ENCODE measurements at regions of chr2 and their contacts with region 1.

Region 1: DNA sequence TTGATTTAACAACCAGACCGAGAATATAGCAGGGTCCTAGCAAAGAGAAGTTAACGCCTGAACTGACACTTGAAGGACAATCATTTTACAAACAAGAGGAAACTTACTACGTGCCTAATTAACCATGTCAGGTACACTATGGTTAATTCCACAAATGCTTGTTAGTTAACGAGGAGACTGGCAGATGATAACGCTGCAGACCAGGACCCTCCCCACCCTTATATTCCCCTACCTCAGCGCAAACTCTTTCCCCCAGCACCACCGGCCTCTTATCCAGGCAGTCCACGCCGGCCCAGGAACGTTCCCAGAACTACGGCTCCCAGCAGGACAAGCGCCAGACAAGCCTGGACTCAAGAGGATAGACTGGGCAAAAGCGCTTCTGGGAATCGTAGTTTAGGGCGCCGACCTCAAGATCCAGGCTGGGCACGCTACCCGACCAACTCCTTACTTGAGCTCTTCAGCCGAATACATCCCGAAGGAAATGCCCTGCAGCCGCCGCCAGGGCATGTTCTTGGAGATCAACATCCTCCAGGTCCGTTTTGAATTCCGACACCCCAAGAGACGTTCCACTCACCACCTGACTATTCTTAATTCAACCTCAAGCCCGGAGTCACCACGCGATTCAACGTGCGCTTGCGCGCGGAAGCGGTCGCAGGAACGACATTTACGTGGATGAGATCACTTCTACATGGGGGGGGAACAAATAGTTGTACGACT is at the start of gene POLR1A:
- DNase-seq: peak; percentile 93
- H3K4me3 Mint-ChIP-seq: peak within 1 kb of the TSS; percentile 99
- H3K27ac Mint-ChIP-seq: peak within 1 kb of the TSS; percentile 99
- H3K4me1 Mint-ChIP-seq: peaks cover 31% of the 10 kb centered on the region
- H3K27me3 Mint-ChIP-seq: no peaks in the 10 kb centered on the region
- CTCF ChIP-seq: no peak
- total RNA-seq, gene POLR1A: 46.4 and 52.7 TPM in 2 replicates

Region 2: DNA sequence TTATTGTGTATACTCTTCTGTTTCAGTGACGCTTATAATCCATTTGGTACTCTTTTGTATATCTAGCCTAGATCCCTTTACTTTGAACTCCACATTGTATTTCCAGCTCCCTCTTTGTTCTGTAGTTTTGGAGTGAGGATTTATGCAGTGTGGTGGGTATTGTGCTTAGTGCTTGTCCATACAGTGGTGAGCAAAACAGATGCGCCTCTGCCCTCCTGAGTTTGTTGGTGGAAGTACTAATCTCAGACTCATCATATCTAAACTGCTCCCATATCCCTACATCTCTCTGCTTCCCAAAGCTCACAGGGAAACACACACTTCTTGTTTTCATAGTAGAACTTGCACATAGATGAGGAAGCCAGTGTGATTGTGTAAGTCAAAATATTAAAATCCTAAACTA is 12.7 kb after region 1 on chr2:
- CTCF ChIA-PET with region 1: interaction called, 5 read pairs
- POLR2A ChIA-PET with region 1: interaction called, 17 read pairs
- intact Hi-C with region 1: no loop called
- DNase-seq: no peak
- H3K4me3 Mint-ChIP-seq: no peak overlapping the region
- H3K27ac Mint-ChIP-seq: no peak overlapping the region
- H3K4me1 Mint-ChIP-seq: no peaks in the 10 kb centered on the region
- H3K27me3 Mint-ChIP-seq: no peaks in the 10 kb centered on the region
- CTCF ChIP-seq: no peak

Region 3: DNA sequence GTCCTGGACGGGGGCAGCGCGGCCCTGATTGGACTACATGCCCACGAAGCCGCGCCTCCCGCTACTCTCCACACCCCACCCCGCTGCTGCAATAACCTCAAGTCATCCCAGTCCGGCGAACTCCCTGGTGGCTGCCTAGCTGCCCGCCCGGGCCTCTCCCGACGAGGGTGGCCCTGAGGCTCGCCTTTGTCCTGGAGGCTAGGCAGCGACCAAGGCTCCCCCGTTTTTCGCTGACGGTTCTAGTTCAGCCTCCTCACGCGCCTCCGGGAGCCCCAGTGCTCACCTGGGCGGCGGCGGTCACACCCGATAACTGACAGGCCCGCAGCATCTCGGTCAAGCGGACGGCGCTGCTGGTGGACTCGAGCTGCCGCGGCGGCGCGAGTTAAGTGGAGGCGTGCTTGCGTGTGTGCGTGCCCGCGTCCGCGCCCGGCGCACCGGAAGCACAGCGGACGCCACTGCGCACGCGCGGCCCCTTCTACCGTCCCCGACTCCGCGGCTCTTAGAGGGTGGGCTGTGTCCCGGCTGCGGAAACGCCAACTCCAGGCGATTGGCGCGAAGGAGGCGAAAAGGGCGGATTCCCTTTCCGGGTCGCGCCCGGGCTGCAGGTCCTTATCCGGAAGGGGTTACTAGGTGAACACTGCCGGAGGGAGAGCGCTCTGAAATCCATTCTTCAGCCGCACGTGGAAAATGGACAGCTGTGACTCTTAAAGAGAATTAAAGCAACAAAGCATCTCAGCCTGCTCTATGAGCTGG is 89.8 kb after region 1 on chr2 and contains the start of gene IMMT:
- CTCF ChIA-PET with region 1: no interaction called
- POLR2A ChIA-PET with region 1: interaction called, 28 read pairs
- intact Hi-C with region 1: no loop called
- DNase-seq: peak; percentile 96
- H3K4me3 Mint-ChIP-seq: peak within 1 kb of the TSS; percentile 95
- H3K27ac Mint-ChIP-seq: peak within 1 kb of the TSS; percentile 98
- H3K4me1 Mint-ChIP-seq: peaks cover 14% of the 10 kb centered on the region
- H3K27me3 Mint-ChIP-seq: no peaks in the 10 kb centered on the region
- CTCF ChIP-seq: no peak
- total RNA-seq, gene IMMT: 84.6 and 114 TPM in 2 replicates